K562 (cell line): ENCODE measurements at regions of chr7 and their contacts with region 1.

Region 1: DNA sequence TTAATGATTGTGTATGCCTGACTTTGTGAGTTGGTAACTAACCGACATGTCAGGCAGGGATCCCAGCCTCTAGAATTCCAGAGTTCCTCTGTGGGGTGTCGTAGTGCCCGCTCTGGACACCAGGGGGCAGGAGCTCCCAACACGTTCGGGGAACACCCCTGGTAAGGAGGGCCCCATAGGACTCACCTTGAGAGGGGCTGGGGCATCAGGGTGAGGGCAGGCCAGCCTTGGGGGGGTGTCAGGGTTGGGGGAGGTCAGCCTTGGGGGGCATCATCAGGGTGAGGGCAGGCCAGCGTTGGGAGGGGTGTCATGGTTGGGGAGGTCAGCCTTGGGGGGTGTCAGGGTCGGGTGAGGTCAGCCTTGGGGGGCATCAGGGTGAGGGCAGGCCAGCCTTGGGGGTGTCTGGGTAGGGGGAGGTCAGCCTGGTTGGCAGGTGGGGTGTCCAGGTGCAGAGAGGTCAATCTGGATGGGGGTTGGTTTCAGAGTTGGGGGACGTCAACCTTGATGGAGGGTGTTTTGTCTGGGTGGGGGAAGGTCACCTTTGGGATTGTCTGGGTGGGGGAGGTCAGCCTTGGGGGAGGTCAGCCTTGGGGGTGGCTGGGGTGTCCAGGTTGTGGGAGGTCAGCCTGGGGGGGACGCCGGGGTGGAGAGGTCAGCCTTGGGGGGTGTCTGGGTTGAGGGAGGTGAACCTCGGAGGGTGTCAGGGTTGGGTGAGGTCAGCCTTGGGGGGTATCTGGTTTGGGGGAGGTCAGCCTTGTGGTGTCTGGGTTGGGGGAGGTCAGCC is 45.6 kb upstream of the SUN1 start:
- DNase-seq: peak; percentile 62 to 86 (median 82)
- ATAC-seq: peak; percentile 95
- H3K4me3 ChIP-seq: no peak overlapping the region
- H3K27ac ChIP-seq: no peak overlapping the region
- H3K4me1 ChIP-seq: peaks cover 0 to 6% of the 10 kb centered on the region in 2 experiments; a peak in 1 of 5 replicates
- H3K27me3 ChIP-seq: no peaks in the 10 kb centered on the region
- CTCF ChIP-seq: peak; percentile 78 to 82 (median 78)
- EP300 ChIP-seq: no peak
- POLR2A ChIP-seq: no peak
- RAD21 ChIP-seq: peak; percentile 35 to 73; a peak in 3 of 4 replicates

Region 2: DNA sequence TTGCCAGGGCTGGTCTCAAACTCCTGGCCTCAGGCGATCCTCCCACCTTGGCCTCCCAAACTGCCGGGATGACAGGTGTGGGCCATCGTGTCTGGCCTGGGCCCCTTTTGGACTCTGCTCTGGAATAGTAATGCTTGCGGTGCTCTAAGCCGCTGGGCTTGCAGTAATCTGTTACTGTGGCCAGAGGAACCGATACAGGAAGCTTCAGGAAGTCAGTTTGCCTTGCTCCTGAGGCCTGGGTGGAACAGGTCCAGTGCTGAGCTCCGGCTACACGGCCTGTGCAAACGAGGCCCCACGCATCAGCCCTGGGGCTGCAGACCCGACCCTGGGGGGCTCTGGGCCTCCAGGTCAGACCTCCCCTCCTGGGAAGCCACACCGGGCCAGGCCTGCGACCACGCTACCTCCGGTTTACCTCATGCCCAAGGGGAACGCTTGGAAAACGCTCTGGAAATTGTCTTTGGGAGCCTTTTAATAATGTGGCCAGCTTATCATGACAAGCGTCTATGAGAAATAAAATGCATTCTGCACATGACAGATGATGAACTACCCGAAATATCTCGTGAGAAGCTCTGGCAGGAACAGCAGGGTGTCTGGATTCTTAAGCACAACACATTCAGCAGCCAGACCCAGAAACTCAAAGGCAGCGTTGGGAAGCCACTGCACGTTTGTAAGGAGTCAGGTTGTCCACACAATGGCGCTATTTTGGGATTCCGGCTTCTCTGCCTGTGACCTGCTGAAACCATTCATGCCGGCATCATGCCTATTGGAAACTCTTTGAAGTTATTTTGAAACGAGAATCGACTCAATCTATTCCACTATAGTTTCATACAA is 178.0 kb after region 1 on chr7:
- CTCF ChIA-PET with region 1: no interaction called
- POLR2A ChIA-PET with region 1: no interaction called
- in situ Hi-C with region 1: no loop called
- intact Hi-C with region 1: loop called (anchors 10 kb)
- DNase-seq: peak in 2 of 4 experiments; percentile 45 to 56
- ATAC-seq: peak; percentile 47
- H3K4me3 ChIP-seq: no peak overlapping the region
- H3K27ac ChIP-seq: no peak overlapping the region
- H3K4me1 ChIP-seq: peaks cover 0 to 42% of the 10 kb centered on the region in 2 experiments; a peak in 2 of 5 replicates
- H3K27me3 ChIP-seq: peaks cover 12 to 24% of the 10 kb centered on the region in 2 experiments; a peak in 3 of 5 replicates
- CTCF ChIP-seq: peak; percentile 42 to 46 (median 45); a peak in 5 of 6 replicates
- EP300 ChIP-seq: no peak
- POLR2A ChIP-seq: no peak
- RAD21 ChIP-seq: peak in 1 of 2 experiments; percentile 31; a peak in 1 of 4 replicates

Region 3: DNA sequence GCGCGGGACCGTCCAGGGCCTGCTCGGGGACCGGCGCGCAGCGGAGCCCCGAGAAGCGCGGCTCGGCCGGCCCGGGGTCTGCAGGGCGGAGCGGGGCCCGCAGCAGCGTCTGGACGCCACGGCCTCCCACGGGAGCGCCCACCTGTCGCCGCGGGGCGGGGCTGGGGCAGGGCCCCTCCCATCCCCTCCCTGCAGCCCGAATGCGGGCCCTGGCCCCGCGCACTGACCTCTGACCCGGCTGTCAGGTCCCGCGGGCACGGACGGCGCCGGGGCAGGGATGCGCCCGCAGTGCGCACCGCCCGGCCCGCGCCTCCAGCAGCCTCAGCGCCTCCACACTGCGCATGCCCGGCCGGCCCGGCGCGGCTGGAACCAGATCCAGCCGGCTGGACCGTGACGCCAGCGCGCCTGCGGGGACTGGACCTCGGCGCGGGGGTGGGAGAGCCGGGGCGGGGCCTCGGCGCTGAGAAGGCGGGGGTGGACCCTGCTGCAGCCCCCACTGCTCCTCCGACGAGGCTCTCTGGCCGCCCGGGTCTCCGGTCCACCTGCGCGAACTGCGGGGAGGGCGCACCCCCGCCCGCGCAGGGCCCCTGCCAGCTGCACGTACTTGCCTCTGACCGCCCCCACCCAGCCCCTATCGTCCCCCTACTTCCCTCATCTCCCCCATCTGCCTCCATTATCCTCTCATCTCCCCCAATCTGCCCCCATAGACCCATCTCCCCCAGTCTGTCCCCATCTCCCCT is 241.5 kb after region 1 on chr7:
- CTCF ChIA-PET with region 1: no interaction called
- POLR2A ChIA-PET with region 1: no interaction called
- in situ Hi-C with region 1: no loop called
- intact Hi-C with region 1: no loop called
- DNase-seq: peak; percentile 94 to 98 (median 97)
- ATAC-seq: peak; percentile 94
- H3K4me3 ChIP-seq: peak overlapping the region; percentile 72
- H3K27ac ChIP-seq: peak overlapping the region; percentile 88
- H3K4me1 ChIP-seq: peaks cover 13 to 82% of the 10 kb centered on the region in 2 experiments
- H3K27me3 ChIP-seq: no peaks in the 10 kb centered on the region
- CTCF ChIP-seq: no peak
- EP300 ChIP-seq: no peak
- POLR2A ChIP-seq: no peak
- RAD21 ChIP-seq: no peak